Panc1 (cell line): ENCODE measurements at regions of chr13 and their contacts with region 1.

Region 1: GRCh38 chr13:49436890-49437289 is 7.0 kb downstream of the CAB39L start:
- DNase-seq: no peak
- ATAC-seq: no peak; the same call in 1 of the 2 replicates
- H3K4me3 ChIP-seq: no peak overlapping the region
- H3K27ac ChIP-seq: no peak overlapping the region
- H3K4me1 ChIP-seq: no peaks in the 10 kb centered on the region
- H3K27me3 ChIP-seq: no peaks in the 10 kb centered on the region
- CTCF ChIP-seq: no peak; the same call in 1 of the 2 replicates

Region 2: DNA sequence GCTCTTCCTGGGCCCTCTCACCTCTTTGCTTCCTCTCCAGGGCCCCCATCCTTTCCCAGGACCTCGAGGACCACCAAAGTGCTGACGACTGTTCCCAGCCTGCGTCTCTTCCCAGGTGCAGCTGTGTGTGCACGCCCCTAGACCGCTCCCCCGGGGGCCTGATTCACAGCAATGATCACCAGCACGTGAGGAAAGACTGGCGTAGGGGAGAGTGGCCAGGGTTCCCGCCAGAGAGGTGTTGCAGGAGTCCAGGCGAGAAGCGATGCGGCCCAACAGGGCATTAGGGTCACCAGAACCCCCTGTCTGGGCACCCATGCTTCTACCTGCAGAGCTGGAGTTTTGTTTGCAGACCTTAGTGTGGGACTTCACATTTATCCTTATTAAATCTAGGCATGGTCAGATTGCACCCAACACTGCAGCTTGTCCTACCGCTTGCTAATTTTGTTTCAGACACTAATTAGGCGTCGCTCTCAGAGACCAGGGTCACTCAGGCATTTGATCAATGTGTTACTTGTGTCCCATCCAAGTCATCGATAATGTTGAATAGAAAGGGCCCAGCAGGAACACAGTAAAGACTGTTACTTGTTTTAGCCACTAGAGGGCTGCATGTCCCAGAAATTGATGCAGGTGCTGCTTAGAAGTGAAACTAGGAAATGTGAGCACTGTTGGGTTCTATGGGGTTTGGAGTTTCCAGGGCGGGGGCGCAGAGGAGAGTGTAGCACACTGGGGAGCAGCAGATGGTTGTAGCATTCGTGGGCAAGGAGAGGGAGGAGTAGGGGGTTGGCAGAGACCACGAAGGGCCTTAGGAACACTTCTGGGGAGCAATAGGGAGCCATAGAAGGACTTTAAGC is 135.9 kb before region 1 on chr13:
- CTCF ChIA-PET with region 1: no interaction called
- POLR2A ChIA-PET with region 1: no interaction called
- in situ Hi-C with region 1: no loop called
- intact Hi-C with region 1: loop called (anchors 5 kb)
- DNase-seq: peak; percentile 36
- ATAC-seq: peak; percentile 94
- H3K4me3 ChIP-seq: peak overlapping the region; percentile 8 to 27; a peak in 3 of 4 replicates
- H3K27ac ChIP-seq: peak overlapping the region; percentile 17; the same call in 1 of the 2 replicates
- H3K4me1 ChIP-seq: no peaks in the 10 kb centered on the region
- H3K27me3 ChIP-seq: no peaks in the 10 kb centered on the region
- CTCF ChIP-seq: peak; percentile 85